ENCODE measurements at regions of chr1 and their contacts with region 1.

Region 1: DNA sequence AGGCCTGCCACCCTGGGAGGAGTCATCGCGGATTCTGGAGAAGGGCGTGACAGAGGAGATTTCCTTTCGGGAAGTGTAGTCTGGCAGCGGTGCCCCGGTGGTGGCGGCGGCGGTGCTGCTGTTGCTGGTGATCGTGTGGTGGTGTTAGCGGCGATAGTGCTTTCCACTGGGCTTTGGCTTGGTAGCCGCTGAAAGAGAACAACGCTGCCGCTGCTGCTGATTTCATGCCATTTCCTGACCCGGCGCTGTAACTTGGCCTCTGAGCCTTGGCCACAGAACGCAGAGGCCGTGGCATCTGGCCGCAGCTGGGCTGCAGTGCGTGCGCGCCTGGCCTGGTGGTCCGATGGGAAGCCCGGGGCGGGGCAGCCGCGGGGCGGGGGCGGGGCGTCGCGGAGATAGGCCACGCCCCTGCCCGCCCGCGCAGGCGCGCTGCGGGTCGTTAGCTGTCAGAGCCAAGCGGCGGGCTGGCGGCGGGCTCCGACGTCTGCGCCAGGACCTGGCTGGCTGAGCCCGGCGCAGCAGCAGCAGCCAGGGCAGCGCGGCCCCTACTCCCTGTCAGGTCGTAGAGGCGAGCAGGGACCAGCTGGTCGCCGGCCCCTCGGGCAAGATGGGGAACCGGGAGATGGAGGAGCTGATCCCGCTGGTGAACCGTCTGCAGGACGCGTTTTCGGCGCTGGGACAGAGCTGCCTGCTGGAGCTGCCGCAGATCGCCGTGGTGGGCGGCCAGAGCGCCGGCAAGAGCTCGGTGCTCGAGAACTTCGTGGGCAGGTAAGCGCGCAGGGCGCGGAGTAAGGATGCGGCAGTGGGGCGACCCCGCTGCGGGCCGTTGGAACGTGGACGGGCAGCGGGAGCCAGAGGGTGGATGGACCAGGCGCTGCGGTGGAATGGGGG is at the start of gene DNM3:
- DNase-seq: peak; percentile 91
- H3K4me3 ChIP-seq: peak within 1 kb of the TSS; percentile 65 to 82 (median 78)
- H3K27ac ChIP-seq: peak within 1 kb of the TSS; percentile 71 to 79 (median 75)
- H3K4me1 ChIP-seq: peaks cover 0 to 11% (median 4%) of the 10 kb centered on the region in 4 donors
- H3K27me3 ChIP-seq: no peaks in the 10 kb centered on the region
- CTCF ChIP-seq: no peak
- EP300 ChIP-seq: no peak
- POLR2A ChIP-seq: no peak
- total RNA-seq, gene DNM3: 3.9 to 13.3 (median 5.7) TPM

Region 2: GRCh38 chr1:171441278-171441677 is 400.0 kb before region 1 on chr1:
- intact Hi-C with region 1: no loop called
- DNase-seq: no peak
- H3K4me3 ChIP-seq: no peak overlapping the region
- H3K27ac ChIP-seq: no peak overlapping the region
- H3K4me1 ChIP-seq: no peaks in the 10 kb centered on the region
- H3K27me3 ChIP-seq: no peaks in the 10 kb centered on the region
- CTCF ChIP-seq: no peak
- EP300 ChIP-seq: no peak
- POLR2A ChIP-seq: no peak

Region 3: DNA sequence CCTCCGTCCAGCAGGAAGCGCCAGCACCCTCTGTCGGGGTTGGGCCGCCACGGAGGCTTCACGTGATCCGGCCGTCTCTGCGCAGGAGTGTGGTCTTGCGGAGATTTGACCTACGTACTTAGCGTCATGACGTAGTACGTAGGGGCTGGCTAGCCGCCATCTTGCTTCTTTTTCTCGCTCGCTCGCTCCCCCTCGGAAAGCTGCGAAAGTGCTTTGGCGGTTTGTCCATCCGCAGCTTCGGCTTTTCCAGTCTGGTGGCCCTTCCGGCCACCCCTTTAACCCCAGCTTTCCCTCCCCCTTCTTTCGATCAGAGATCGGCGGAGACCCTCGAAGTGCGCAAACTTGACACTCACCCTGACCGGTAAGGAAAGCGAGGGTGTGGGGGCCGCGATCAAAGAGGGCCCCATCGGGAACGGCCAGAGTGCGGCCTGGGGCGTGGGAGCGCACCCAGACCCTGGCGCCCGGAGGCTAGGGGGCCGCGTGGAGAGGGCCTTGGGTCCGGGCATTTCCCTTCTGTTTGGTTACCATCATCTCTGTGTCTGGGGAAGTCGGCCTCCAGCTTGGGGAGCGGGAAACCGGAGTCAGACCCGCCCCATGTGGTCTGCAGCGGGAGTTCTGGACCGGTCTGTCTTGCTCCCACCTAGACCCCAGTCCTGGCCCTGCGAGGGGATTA is 355.8 kb before region 1 on chr1 and contains the start of gene PRRC2C:
- intact Hi-C with region 1: loop called (anchors 10 kb)
- DNase-seq: peak; percentile 99
- H3K4me3 ChIP-seq: peak within 1 kb of the TSS; percentile 65 to 91 (median 88)
- H3K27ac ChIP-seq: peak within 1 kb of the TSS; percentile 98 to 99 (median 98)
- H3K4me1 ChIP-seq: peaks cover 0 to 38% (median 34%) of the 10 kb centered on the region in 4 donors
- H3K27me3 ChIP-seq: no peaks in the 10 kb centered on the region
- CTCF ChIP-seq: peak in 2 of 4 experiments; percentile 16 to 74
- EP300 ChIP-seq: peak in 1 of 4 donors; percentile 63
- POLR2A ChIP-seq: peak; percentile 59 to 60
- total RNA-seq, gene PRRC2C: 46.4 to 80.0 (median 53.1) TPM

Region 4: GRCh38 chr1:171597203-171597602 is 244.1 kb before region 1 on chr1:
- intact Hi-C with region 1: no loop called
- DNase-seq: no peak
- H3K4me3 ChIP-seq: no peak overlapping the region
- H3K27ac ChIP-seq: no peak overlapping the region
- H3K4me1 ChIP-seq: peaks cover 0 to 8% (median 0%) of the 10 kb centered on the region in 4 donors
- H3K27me3 ChIP-seq: no peaks in the 10 kb centered on the region
- CTCF ChIP-seq: no peak
- EP300 ChIP-seq: no peak
- POLR2A ChIP-seq: no peak

Region 5: GRCh38 chr1:171741872-171742576 is 99.3 kb before region 1 on chr1 and contains the start of gene VAMP4:
- intact Hi-C with region 1: loop called (anchors 2 kb)
- DNase-seq: peak; percentile 94
- H3K4me3 ChIP-seq: peak within 1 kb of the TSS; percentile 75 to 97 (median 90)
- H3K27ac ChIP-seq: peak within 1 kb of the TSS; percentile 91 to 98 (median 96)
- H3K4me1 ChIP-seq: peaks cover 0 to 29% (median 18%) of the 10 kb centered on the region in 4 donors
- H3K27me3 ChIP-seq: no peaks in the 10 kb centered on the region
- CTCF ChIP-seq: no peak
- EP300 ChIP-seq: peak in 1 of 4 donors; percentile 39
- POLR2A ChIP-seq: peak; percentile 74 to 86
- total RNA-seq, gene VAMP4: 13.0 to 16.9 (median 15.7) TPM

Region 6: DNA sequence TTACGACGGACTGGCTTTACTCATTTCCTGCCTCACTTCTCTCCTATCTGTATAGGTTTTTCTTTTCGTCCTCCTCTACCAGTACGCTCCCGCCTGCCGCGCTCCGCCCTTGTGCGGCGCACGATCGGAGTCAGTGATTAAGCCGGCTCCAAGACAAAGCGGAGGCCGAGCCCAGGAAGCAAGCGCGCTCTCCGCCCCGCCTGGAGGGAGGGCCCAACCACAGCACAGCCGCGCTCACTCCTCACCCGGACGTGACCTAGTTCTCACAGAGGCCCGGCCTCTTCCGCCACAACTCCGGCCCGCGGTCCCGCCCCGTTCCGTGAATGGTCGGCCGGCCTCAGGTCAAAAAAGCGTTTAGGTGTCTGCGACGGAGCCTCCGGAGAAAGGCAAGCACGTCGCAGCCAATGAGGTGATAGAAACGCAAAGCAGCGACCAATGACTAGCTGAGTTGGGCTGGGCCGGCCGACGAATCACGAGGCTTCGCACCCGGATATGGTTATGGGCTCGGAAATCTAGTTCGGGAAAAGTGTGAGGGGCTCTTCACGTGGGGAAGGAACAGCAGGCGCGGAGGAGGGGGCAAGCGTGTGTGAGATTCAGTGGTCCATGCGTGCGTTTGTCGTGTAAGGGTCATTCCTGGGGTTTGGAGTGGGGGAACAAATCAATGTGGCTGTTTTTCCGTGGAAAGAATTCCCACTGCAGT is 60.0 kb before region 1 on chr1 and contains the start of gene METTL13:
- intact Hi-C with region 1: loop called (anchors 5 kb)
- DNase-seq: peak; percentile 99
- H3K4me3 ChIP-seq: peak within 1 kb of the TSS; percentile 56 to 84 (median 74)
- H3K27ac ChIP-seq: peak within 1 kb of the TSS; percentile 84 to 90 (median 89)
- H3K4me1 ChIP-seq: peaks cover 0 to 43% (median 33%) of the 10 kb centered on the region in 4 donors
- H3K27me3 ChIP-seq: no peaks in the 10 kb centered on the region
- CTCF ChIP-seq: no peak
- EP300 ChIP-seq: no peak
- POLR2A ChIP-seq: peak; percentile 94 to 95
- total RNA-seq, gene METTL13: 8.4 to 21.8 (median 17.0) TPM

Region 7: GRCh38 chr1:171801487-171801891 is 39.8 kb before region 1 on chr1:
- intact Hi-C with region 1: loop called (anchors 5 kb)
- DNase-seq: no peak
- H3K4me3 ChIP-seq: no peak overlapping the region
- H3K27ac ChIP-seq: no peak overlapping the region
- H3K4me1 ChIP-seq: no peaks in the 10 kb centered on the region
- H3K27me3 ChIP-seq: no peaks in the 10 kb centered on the region
- CTCF ChIP-seq: peak; percentile 36 to 78 (median 57)
- EP300 ChIP-seq: no peak
- POLR2A ChIP-seq: no peak

Region 8: DNA sequence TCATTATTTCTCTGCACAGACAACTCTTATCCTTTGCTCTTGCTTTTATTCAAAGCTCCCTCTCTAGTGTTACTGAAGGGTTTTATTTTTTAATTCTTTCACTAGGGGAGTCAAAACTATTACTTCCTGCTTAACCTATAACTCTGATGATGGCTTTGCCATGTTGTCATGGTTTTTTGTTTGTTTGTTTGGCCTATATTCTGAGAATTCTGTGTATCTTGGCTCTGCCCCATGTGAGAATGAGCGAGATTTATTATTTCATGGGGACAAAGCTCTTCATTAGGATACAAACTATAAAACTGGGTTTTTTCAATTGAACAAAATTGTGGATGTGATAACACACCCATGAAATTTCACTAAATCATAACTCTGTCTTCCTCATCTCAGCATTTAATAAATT is 388.6 kb after region 1 on chr1:
- intact Hi-C with region 1: no loop called
- DNase-seq: no peak
- H3K4me3 ChIP-seq: no peak overlapping the region
- H3K27ac ChIP-seq: no peak overlapping the region
- H3K4me1 ChIP-seq: no peaks in the 10 kb centered on the region
- H3K27me3 ChIP-seq: no peaks in the 10 kb centered on the region
- CTCF ChIP-seq: no peak
- EP300 ChIP-seq: no peak
- POLR2A ChIP-seq: no peak

Region 9: GRCh38 chr1:173190101-173190906 is 1349.0 kb after region 1 on chr1:
- intact Hi-C with region 1: loop called (anchors 10 kb)
- DNase-seq: peak; percentile 91
- H3K4me3 ChIP-seq: no peak overlapping the region
- H3K27ac ChIP-seq: peak overlapping the region; percentile 69 to 81 (median 72)
- H3K4me1 ChIP-seq: peaks cover 0 to 22% (median 18%) of the 10 kb centered on the region in 4 donors
- H3K27me3 ChIP-seq: no peaks in the 10 kb centered on the region
- CTCF ChIP-seq: no peak
- EP300 ChIP-seq: peak in 2 of 4 donors; percentile 14 to 26
- POLR2A ChIP-seq: no peak